CD14-positive monocyte (primary cell): ENCODE measurements at regions of chr6 and their contacts with region 1.

Region 1: GRCh38 chr6:46993846-46994245 is 48.3 kb downstream of the ADGRF1 start:
- DNase-seq: no peak
- H3K4me3 ChIP-seq: no peak overlapping the region
- H3K4me3 Mint-ChIP-seq: no peak overlapping the region
- H3K27ac ChIP-seq: no peak overlapping the region
- H3K27ac Mint-ChIP-seq: no peak overlapping the region
- H3K4me1 ChIP-seq: no peaks in the 10 kb centered on the region
- H3K4me1 Mint-ChIP-seq: no peaks in the 10 kb centered on the region
- H3K27me3 ChIP-seq: no peaks in the 10 kb centered on the region
- H3K27me3 Mint-ChIP-seq: peaks cover 2 to 5% (median 2%) of the 10 kb centered on the region in 3 donors
- CTCF ChIP-seq: no peak

Region 2: GRCh38 chr6:46419576-46420002 is 574.3 kb before region 1 on chr6:
- intact Hi-C with region 1: loop called in 1 of 2 experiments (anchors 10 kb)
- DNase-seq: peak; percentile 3 to 18 (median 4)
- H3K4me3 ChIP-seq: no peak overlapping the region
- H3K4me3 Mint-ChIP-seq: no peak overlapping the region
- H3K27ac ChIP-seq: no peak overlapping the region
- H3K27ac Mint-ChIP-seq: no peak overlapping the region
- H3K4me1 ChIP-seq: peaks cover 3 to 7% of the 10 kb centered on the region in 2 donors
- H3K4me1 Mint-ChIP-seq: peaks cover 7% of the 10 kb centered on the region
- H3K27me3 ChIP-seq: no peaks in the 10 kb centered on the region
- H3K27me3 Mint-ChIP-seq: peaks cover 0 to 4% (median 0%) of the 10 kb centered on the region in 3 donors
- CTCF ChIP-seq: peak; percentile 58

Region 3: GRCh38 chr6:47310131-47310480 is 316.3 kb after region 1 on chr6:
- intact Hi-C with region 1: no loop called
- DNase-seq: no peak
- H3K4me3 ChIP-seq: peak overlapping the region in 1 of 3 experiments; percentile 79
- H3K4me3 Mint-ChIP-seq: peak overlapping the region; percentile 79 to 88
- H3K27ac ChIP-seq: no peak overlapping the region
- H3K27ac Mint-ChIP-seq: peak overlapping the region in 1 of 7 donors; percentile 79
- H3K4me1 ChIP-seq: peaks cover 10 to 14% of the 10 kb centered on the region in 2 donors
- H3K4me1 Mint-ChIP-seq: peaks cover 11% of the 10 kb centered on the region
- H3K27me3 ChIP-seq: peaks cover 22 to 27% of the 10 kb centered on the region in 2 donors
- H3K27me3 Mint-ChIP-seq: peaks cover 24 to 38% (median 27%) of the 10 kb centered on the region in 3 donors
- CTCF ChIP-seq: peak; percentile 39